ENCODE measurements at regions of chr1 and their contacts with region 1.

Region 1: DNA sequence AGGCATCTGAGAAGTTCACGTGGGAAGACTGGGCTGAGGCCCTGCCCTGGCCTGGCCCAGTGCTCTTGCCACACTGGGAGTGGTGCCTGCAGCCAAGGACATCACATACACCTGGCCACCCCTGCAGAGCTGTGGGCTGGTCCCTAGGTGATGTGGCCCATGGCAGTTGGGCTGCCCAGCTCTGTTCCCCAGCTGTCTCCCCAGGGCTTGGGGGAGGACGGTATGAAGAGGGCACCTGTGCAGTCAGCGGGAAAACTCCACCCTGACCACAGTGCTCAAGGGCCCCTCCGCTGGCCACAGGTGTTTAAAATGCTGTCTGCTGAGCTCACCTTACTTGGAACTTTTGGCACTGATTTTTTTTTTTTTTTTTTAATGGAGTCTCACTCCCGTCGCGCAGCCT is 120.4 kb upstream of the SLC25A33 start:
- DNase-seq: peak in 1 of 2 experiments; percentile 17
- H3K4me3 ChIP-seq: no peak overlapping the region
- H3K27ac ChIP-seq: no peak overlapping the region
- H3K4me1 ChIP-seq: peaks cover 13% of the 10 kb centered on the region
- H3K27me3 ChIP-seq: no peaks in the 10 kb centered on the region
- CTCF ChIP-seq: no peak

Region 2: GRCh38 chr1:9486466-9487140 is 67.8 kb after region 1 on chr1:
- CTCF ChIA-PET with region 1: no interaction called
- POLR2A ChIA-PET with region 1: no interaction called
- intact Hi-C with region 1: no loop called
- DNase-seq: no peak
- H3K4me3 ChIP-seq: no peak overlapping the region
- H3K27ac ChIP-seq: no peak overlapping the region
- H3K4me1 ChIP-seq: no peaks in the 10 kb centered on the region
- H3K27me3 ChIP-seq: no peaks in the 10 kb centered on the region
- CTCF ChIP-seq: no peak

Region 3: DNA sequence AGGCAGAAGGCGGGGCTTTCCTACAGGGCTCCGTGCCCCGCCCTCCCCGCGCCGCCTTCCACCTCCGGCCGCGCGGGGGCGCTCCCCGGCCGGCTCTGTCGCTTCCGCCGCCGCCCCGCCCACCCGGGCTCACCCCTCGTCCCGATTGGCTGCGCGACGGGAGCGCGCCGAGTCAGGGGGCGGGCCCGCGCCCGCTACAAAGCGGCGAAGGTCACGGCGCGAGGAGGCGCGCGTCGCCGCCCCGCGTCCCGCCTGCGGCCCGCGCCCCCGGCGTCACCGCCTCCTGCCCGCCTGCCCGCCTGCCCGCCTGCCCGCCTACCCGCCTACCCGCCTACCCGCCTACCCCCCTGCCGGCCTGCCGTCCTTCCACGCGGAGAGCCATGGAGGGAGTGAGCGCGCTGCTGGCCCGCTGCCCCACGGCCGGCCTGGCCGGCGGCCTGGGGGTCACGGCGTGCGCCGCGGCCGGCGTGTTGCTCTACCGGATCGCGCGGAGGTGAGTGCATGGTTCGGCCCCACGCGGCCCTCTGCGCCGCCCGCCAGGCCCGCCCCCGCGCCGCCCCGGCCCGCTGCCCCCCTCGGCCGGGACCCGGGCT is 169.8 kb after region 1 on chr1 and contains the start of gene TMEM201:
- CTCF ChIA-PET with region 1: no interaction called
- POLR2A ChIA-PET with region 1: interaction called, 14 read pairs
- intact Hi-C with region 1: no loop called
- DNase-seq: peak; percentile 62 to 93
- H3K4me3 ChIP-seq: peak within 1 kb of the TSS; percentile 78
- H3K27ac ChIP-seq: no peak within 1 kb of the TSS
- H3K4me1 ChIP-seq: no peaks in the 10 kb centered on the region
- H3K27me3 ChIP-seq: no peaks in the 10 kb centered on the region
- CTCF ChIP-seq: no peak
- total RNA-seq, gene TMEM201: 17.2 and 17.4 TPM in 2 replicates

Region 4: DNA sequence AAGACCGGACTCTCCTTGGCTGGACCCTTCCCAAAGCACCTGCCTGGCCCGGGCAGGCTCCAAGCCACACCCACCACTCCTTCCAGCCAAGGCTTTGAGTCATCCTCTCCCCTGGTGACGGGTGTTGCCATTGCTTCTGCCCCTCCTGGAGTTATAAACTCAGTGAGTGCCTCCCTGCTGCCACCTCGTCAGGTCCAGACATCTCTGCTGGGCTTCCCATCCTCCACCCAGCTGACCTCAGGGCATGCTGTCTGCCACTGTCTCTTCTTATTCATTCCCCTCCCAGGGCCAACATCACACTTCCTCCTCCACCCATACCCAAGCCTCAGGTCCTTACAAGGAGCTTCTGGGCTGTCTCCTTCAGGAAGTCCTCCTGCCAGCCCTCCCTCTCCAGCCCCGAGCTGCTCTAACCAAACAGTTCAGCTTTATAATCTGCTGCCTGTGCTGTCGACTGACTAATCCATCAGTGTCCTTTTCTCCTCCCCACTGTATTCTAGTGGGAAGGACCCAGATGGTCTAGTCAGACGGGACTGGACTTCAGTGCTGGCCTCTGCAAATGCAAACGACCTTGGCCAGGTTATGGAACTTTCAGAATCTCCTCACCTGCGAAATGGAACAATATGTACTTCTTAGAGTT is 406.7 kb after region 1 on chr1:
- CTCF ChIA-PET with region 1: no interaction called
- POLR2A ChIA-PET with region 1: no interaction called
- intact Hi-C with region 1: no loop called
- DNase-seq: peak; percentile 92 to 94
- H3K4me3 ChIP-seq: peak overlapping the region; percentile 25; the same call in 1 of the 2 replicates
- H3K27ac ChIP-seq: peak overlapping the region; percentile 61
- H3K4me1 ChIP-seq: peaks cover 36% of the 10 kb centered on the region
- H3K27me3 ChIP-seq: no peaks in the 10 kb centered on the region
- CTCF ChIP-seq: no peak